Heart left ventricle (tissue), 16 donors: ENCODE measurements at regions of chr3 and their contacts with region 1.

Region 1: GRCh38 chr3:16884084-16884747 is 539 bp upstream of the PLCL2 start:
- DNase-seq: peak; percentile 76 to 90 (median 80)
- ATAC-seq: peak; percentile 53 to 77 (median 74)
- H3K4me3 ChIP-seq: peak overlapping the region; percentile 78 to 93 (median 91)
- H3K27ac ChIP-seq: peak overlapping the region; percentile 91 to 99 (median 96)
- H3K4me1 ChIP-seq: peaks cover 0 to 59% (median 32%) of the 10 kb centered on the region in 12 donors
- H3K27me3 ChIP-seq: no peaks in the 10 kb centered on the region
- CTCF ChIP-seq: peak; percentile 53 to 80 (median 72)
- POLR2A ChIP-seq: peak in 1 of 2 donors; percentile 14

Region 2: DNA sequence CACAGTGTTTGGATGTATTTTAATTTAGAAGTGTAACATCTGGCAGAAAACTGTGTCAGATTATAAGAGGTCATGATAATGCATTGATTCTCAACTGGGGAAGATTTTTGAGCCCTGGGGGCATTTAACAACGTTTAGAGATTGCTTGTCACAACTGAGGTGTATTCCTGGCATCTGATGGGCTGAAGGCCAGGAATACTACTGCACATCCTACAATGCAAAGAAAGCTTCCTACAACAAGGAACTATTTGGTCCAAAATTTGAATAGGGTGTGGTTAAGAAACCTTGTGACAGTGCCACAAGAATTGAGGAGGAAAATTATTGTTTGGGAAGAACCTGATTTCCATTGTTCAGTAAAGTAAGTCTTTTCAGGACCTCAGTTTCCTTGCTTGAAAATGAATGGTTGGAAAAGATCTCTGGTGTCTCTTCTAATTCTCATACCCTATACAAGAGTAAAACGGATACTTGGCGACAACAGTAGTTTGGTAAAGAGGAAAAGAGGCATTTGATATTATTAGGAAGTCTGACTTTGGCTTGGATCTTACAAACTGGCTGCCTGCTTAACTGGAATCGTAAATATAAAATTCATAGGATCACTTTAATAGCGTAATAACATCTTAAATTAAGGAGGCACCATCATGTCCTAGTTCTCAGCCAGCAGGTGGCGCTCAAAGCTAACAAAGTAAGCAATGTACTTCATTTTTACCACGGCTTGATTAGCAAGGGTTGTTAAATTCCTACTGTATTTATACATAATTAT is 283.3 kb before region 1 on chr3:
- intact Hi-C with region 1: loop called in 5 of 10 experiments (anchors 5 to 10 kb)
- DNase-seq: peak; percentile 73 to 85 (median 80)
- ATAC-seq: peak; percentile 48 to 76 (median 68)
- H3K4me3 ChIP-seq: peak overlapping the region in 3 of 12 donors; percentile 0 to 19 (median 14)
- H3K27ac ChIP-seq: no peak overlapping the region
- H3K4me1 ChIP-seq: peaks cover 0 to 7% (median 0%) of the 10 kb centered on the region in 12 donors
- H3K27me3 ChIP-seq: no peaks in the 10 kb centered on the region
- CTCF ChIP-seq: peak; percentile 73 to 96 (median 89)
- POLR2A ChIP-seq: no peak

Region 3: GRCh38 chr3:16838561-16838960 is 45.7 kb before region 1 on chr3:
- intact Hi-C with region 1: loop called in 2 of 10 experiments (anchors 5 kb)
- DNase-seq: peak in 2 of 5 donors; percentile 64 to 78
- ATAC-seq: peak; percentile 27 to 77 (median 59)
- H3K4me3 ChIP-seq: peak overlapping the region in 1 of 12 donors; percentile 17
- H3K27ac ChIP-seq: peak overlapping the region; percentile 31 to 79 (median 64)
- H3K4me1 ChIP-seq: peaks cover 0 to 45% (median 11%) of the 10 kb centered on the region in 12 donors
- H3K27me3 ChIP-seq: no peaks in the 10 kb centered on the region
- CTCF ChIP-seq: no peak
- POLR2A ChIP-seq: no peak

Region 4: DNA sequence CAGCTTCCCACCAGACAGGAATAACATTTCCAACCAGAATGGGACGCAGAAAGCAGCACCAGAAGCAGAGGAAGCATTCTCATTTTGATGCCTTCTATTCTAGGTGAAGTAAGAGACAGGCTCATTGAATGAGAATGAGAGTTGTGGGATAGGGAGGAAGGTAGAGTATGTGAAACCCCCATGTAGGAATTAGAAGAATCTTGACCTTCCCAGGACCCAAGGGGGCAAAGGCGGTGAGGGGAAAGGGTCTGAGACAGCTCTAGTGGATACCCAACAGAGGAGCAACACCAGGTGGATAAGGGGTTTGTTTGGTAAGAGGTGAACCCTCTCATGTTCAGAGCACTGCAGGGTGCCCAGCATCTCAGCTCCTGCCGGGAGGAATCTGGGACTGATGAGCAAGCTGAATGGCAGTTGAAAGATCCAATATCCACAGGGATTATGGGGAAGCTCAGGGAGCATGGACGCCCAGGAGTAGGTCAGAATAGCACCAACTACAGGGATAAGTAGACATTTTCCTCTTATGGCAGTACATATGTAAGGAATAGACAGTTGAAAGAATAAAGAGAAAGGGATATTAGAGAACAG is 77.5 kb after region 1 on chr3:
- intact Hi-C with region 1: no loop called
- DNase-seq: no peak
- ATAC-seq: peak in 1 of 4 donors; percentile 33
- H3K4me3 ChIP-seq: no peak overlapping the region
- H3K27ac ChIP-seq: no peak overlapping the region
- H3K4me1 ChIP-seq: peaks cover 0 to 28% (median 0%) of the 10 kb centered on the region in 12 donors
- H3K27me3 ChIP-seq: no peaks in the 10 kb centered on the region
- CTCF ChIP-seq: no peak
- POLR2A ChIP-seq: no peak

Region 5: GRCh38 chr3:16978234-16978920 is 94.2 kb after region 1 on chr3:
- intact Hi-C with region 1: no loop called
- DNase-seq: no peak
- ATAC-seq: peak in 3 of 4 donors; percentile 38 to 50 (median 40)
- H3K4me3 ChIP-seq: no peak overlapping the region
- H3K27ac ChIP-seq: peak overlapping the region in 1 of 12 donors; percentile 39
- H3K4me1 ChIP-seq: peaks cover 0 to 49% (median 8%) of the 10 kb centered on the region in 12 donors
- H3K27me3 ChIP-seq: no peaks in the 10 kb centered on the region
- CTCF ChIP-seq: no peak
- POLR2A ChIP-seq: no peak

Region 6: DNA sequence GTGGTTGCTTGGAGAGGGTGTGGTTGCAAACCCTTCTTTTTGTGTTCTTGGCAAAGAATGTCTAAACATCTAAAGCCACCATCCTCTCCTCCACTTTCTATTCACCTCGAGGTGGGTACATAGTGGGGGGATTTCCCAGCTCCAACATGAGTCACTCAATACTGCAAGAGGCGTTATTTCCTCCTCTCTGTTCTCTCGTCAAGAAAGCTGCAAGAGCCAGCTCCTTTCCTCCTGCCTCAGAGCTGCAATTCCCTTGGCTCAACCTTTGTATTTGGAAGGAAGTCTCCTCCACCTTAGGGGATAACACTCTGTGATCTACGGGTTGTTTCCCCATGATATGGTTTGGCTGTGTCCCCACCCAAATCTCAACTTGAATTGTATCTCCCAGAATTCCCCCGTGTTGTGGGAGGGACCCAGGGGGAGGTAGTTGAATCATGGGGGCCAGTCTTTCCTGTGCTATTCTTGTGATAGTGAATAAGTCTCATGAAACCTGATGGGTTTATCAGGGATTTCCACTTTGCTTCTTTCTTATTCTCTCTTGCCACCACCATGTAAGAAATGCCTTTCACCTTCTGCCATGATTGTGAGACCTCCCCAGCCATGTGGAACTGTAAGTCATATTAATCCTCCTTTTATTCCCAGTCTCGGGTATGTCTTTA is 138.9 kb after region 1 on chr3:
- intact Hi-C with region 1: loop called in 2 of 10 experiments (anchors 5 kb)
- DNase-seq: no peak
- ATAC-seq: peak in 3 of 4 donors; percentile 28 to 82 (median 67)
- H3K4me3 ChIP-seq: no peak overlapping the region
- H3K27ac ChIP-seq: peak overlapping the region in 1 of 12 donors; percentile 11
- H3K4me1 ChIP-seq: peaks cover 0 to 20% (median 6%) of the 10 kb centered on the region in 12 donors
- H3K27me3 ChIP-seq: no peaks in the 10 kb centered on the region
- CTCF ChIP-seq: no peak
- POLR2A ChIP-seq: no peak

Region 7: GRCh38 chr3:17039580-17039979 is 155.4 kb after region 1 on chr3:
- intact Hi-C with region 1: loop called in 7 of 10 experiments (anchors 5 to 10 kb)
- DNase-seq: no peak
- ATAC-seq: peak in 3 of 4 donors; percentile 61 to 65 (median 65)
- H3K4me3 ChIP-seq: no peak overlapping the region
- H3K27ac ChIP-seq: peak overlapping the region in 9 of 12 donors; percentile 2 to 65 (median 51)
- H3K4me1 ChIP-seq: peaks cover 0 to 49% (median 16%) of the 10 kb centered on the region in 12 donors
- H3K27me3 ChIP-seq: no peaks in the 10 kb centered on the region
- CTCF ChIP-seq: peak in 1 of 12 donors; percentile 12
- POLR2A ChIP-seq: no peak

Region 8: DNA sequence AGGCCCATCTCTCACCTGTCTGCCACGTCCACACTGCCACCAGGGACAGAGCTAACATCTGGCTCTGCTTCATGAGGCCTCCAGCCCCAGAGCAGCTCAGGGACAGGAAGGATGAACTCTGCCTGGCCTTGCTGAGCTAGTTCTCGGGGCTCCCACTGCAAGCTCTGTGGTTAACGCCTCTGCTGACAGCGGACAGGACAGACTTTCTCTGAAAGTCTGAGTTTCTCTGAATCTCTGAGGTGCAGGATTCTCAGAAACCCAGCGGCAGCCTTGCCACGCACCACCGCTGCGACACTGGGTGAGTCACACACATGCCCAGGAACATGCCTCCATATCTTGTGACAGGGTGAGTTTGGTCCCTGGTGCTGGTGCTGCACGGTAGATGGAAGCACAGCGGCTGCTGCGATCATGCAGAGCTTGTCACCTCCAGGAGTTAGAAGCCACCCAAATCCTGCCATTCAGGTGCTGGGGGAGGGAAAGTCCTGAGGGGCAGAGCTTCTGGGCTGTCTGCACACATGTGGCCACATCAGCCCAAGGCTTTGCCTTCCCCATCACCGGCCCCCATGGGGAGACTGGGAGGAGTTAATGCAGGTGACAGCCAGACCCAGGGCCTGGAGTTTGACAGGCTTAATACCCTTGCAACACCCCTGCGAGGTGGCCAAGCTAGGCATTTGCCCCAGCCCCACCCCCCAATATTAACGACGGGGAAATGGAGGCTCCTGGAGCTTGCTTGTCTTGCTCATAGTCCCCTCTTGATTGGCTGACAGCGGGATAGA is 267.6 kb after region 1 on chr3:
- intact Hi-C with region 1: loop called in 2 of 10 experiments (anchors 10 kb)
- DNase-seq: no peak
- ATAC-seq: peak in 1 of 4 donors; percentile 18
- H3K4me3 ChIP-seq: no peak overlapping the region
- H3K27ac ChIP-seq: peak overlapping the region in 1 of 12 donors; percentile 12
- H3K4me1 ChIP-seq: peaks cover 0 to 11% (median 0%) of the 10 kb centered on the region in 12 donors
- H3K27me3 ChIP-seq: no peaks in the 10 kb centered on the region
- CTCF ChIP-seq: no peak
- POLR2A ChIP-seq: no peak